GM13977 (cell line): ENCODE measurements at regions of chr18 and their contacts with region 1.

Region 1: DNA sequence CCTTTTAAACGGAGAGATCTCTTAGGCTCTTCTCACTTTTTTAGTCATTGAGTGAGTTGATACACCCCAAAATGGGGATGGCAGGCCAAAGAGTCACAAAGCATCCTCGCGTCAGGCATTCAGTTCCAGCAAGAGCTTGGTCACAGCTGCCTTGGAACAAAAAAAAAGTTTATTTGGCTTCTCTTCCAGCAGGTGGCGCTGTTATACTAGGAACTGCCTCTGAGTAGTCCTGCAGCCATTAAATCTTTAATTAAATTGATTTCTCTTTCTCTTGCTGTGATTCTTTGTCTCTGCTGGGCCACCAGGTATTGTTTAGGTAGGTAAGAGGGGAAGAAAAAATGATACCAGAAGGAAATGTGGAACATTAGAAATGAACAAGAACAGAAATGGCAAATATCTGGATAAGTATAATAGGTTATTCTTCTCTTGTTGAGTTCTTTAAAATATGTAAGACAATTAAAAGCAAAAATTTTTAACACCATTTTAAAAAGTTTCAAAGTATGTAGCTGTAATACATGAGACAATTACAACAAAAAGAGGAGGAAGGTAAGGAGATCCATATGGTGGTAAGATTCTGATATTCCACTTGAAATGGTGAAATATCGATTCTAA is 175.1 kb downstream of the GALNT1 start:
- DNase-seq: peak; percentile 71
- CTCF ChIP-seq: peak; percentile 73

Region 2: DNA sequence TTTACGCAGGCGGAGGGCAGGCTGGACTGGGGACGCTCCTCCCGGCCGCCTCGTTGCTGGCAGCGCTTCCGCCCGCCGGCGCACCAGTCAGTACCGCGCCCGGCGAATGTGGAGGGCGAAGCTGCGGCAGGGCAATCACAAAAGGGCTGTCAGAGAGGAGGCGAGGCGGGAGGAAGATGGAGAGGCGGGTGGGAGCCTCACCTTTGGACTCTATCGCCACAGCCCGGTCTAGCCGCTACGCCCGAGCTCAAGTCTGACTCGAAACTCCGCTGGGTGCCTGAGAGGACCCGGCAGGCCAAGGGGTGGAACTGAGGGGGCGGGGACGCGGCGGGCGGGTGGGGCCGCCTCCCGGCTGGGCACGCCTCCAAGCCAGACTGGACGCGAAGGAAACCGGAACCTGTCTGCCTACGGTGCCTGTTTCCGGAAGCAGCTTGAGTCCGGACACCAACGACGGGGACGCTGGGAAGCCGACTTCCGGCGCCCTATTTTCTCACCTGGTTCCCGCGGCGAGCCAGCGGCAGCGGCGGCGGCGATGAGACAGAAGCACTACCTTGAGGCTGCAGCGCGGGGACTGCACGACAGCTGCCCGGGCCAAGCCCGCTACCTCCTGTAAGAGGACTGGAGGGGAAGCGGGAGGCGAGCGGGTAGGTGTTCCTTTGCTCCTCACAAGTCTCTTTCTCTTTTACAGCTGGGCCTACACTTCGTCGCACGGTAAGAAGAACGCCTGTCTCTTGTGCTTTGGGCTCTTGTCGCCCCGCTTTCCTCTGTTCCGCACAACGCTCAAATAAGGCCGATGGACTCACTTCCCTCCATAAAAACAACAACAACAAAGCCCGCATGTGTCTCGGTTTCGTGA is 215.8 kb after region 1 on chr18 and contains the start of gene RMP24:
- in situ Hi-C with region 1: loop called (anchors 25 kb)
- DNase-seq: peak; percentile 92
- CTCF ChIP-seq: no peak

Region 3: DNA sequence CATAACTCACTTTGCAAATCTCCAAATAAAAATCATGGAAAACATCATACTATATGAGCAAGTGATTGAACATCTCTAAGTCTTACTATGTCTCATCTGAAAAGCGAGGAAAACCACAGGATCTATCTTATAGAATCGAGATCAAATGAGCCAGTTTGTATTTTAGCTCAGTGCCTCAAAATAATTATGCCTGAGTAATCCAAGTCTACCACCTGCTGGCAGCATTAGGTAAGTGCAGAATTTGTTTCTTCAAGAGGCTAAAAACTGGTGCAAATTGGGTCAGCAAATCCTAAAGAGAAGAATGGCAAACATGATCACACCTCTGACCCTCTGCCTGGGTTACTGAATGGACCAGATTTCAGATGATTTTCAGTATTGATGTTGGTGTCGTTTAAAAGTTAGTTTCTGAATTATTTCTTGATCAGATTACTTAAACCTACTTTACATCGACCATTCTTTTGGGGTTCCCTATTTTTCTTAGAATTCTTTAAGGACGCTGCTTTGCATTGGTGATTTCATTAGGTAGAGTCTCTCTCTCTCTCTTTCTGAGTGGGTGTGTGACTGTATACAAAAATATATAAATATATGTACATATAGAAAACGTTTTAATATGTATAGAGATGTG is 528.2 kb after region 1 on chr18:
- in situ Hi-C with region 1: loop called (anchors 10 kb)
- DNase-seq: peak; percentile 39
- CTCF ChIP-seq: peak; percentile 80